CD14-positive monocyte (primary cell): ENCODE measurements at regions of chr2 and their contacts with region 1.

Region 1: DNA sequence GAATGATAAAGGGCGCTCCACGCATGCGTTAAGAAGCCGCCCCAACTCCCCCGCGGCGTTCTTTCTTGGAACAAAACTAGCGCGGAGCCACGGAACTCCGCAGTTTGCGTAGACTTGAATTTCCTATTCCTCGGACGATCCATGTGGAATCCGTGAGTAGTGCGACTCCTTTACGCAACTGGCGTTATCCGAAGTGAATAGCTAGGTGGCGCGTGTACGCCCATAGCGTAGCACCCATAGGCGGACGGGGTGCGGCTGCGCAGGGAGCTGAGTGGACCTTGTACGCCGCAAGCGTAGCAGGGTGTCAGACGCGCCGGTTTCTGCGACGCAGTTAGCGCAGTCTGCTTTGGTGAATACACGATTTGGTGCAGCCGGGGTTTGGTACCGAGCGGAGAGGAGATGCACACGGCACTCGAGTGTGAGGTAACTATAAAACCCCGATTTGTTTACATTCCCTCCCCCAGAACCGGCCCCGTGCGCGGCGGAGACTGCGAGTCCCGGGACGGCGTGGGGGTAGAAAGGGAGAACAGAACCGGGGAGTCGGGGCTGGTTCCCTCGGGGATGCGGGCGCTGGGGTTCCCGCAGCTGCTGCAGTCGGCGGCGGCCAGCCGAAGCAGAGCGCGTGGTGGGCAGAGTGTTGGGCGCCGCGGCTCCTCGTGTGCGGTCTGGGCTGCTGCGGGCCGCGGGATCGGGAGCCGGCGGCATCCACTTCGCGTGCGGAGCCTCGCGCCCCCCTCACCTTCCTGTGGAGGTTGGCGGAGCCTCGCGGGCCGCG is at the start of gene SLC39A10:
- DNase-seq: peak; percentile 97 to 99 (median 98)
- H3K4me3 ChIP-seq: peak within 1 kb of the TSS; percentile 60 to 100 (median 91)
- H3K4me3 Mint-ChIP-seq: peak within 1 kb of the TSS; percentile 96 to 97
- H3K27ac ChIP-seq: peak within 1 kb of the TSS; percentile 82 to 97
- H3K27ac Mint-ChIP-seq: peak within 1 kb of the TSS; percentile 92 to 99 (median 97)
- H3K4me1 ChIP-seq: peaks cover 21 to 59% of the 10 kb centered on the region in 2 donors
- H3K4me1 Mint-ChIP-seq: peaks cover 42% of the 10 kb centered on the region
- H3K27me3 ChIP-seq: no peaks in the 10 kb centered on the region
- H3K27me3 Mint-ChIP-seq: peaks cover 0 to 2% (median 0%) of the 10 kb centered on the region in 3 donors
- CTCF ChIP-seq: no peak
- polyA plus RNA-seq, gene SLC39A10: 5.2 to 6.9 (median 5.2) TPM

Region 2: GRCh38 chr2:195498176-195498575 is 158.9 kb before region 1 on chr2:
- intact Hi-C with region 1: loop called (anchors 2 to 10 kb)
- DNase-seq: peak; percentile 39 to 59 (median 58)
- H3K4me3 ChIP-seq: no peak overlapping the region
- H3K4me3 Mint-ChIP-seq: no peak overlapping the region
- H3K27ac ChIP-seq: no peak overlapping the region
- H3K27ac Mint-ChIP-seq: no peak overlapping the region
- H3K4me1 ChIP-seq: no peaks in the 10 kb centered on the region
- H3K4me1 Mint-ChIP-seq: no peaks in the 10 kb centered on the region
- H3K27me3 ChIP-seq: no peaks in the 10 kb centered on the region
- H3K27me3 Mint-ChIP-seq: peaks cover 0 to 2% (median 0%) of the 10 kb centered on the region in 3 donors
- CTCF ChIP-seq: peak; percentile 65

Region 3: GRCh38 chr2:195561203-195562032 is 95.6 kb before region 1 on chr2:
- intact Hi-C with region 1: loop called in 1 of 2 experiments (anchors 5 kb)
- DNase-seq: peak; percentile 63 to 86 (median 74)
- H3K4me3 ChIP-seq: peak overlapping the region in 2 of 3 experiments; percentile 1 to 57
- H3K4me3 Mint-ChIP-seq: peak overlapping the region in 1 of 2 donors; percentile 87
- H3K27ac ChIP-seq: peak overlapping the region; percentile 88 to 93
- H3K27ac Mint-ChIP-seq: peak overlapping the region; percentile 92 to 98 (median 96)
- H3K4me1 ChIP-seq: peaks cover 39 to 43% of the 10 kb centered on the region in 2 donors
- H3K4me1 Mint-ChIP-seq: peaks cover 38% of the 10 kb centered on the region
- H3K27me3 ChIP-seq: no peaks in the 10 kb centered on the region
- H3K27me3 Mint-ChIP-seq: no peaks in the 10 kb centered on the region
- CTCF ChIP-seq: no peak

Region 4: DNA sequence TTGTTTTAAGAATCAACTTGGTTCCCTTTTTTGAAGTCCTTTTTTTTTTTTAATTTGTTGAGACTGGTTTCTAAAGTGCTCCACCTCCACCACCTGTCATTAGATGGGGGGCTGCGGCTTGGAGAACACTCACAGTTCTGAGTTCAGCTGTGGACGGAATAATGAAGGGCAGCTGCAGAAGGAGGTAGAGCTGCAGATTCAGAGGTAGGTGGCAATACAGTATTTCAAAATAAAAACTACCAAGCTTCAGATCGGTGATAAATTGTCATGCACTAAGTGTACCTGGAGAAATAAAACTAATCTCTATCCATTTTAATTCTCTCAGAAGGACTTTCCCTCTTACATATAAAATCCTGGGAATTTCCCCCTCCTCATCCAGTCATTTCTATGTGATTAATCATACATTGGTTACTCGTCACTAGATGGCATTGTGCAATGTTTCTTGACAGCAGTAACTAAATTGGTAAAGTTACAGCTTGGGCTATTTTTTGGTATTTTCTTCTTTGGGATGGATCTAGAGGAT is 81.1 kb before region 1 on chr2:
- intact Hi-C with region 1: loop called (anchors 5 to 10 kb)
- DNase-seq: peak; percentile 80 to 96 (median 92)
- H3K4me3 ChIP-seq: peak overlapping the region in 2 of 3 experiments; percentile 44 to 55
- H3K4me3 Mint-ChIP-seq: peak overlapping the region; percentile 68 to 84
- H3K27ac ChIP-seq: peak overlapping the region; percentile 36 to 80
- H3K27ac Mint-ChIP-seq: peak overlapping the region; percentile 87 to 98 (median 94)
- H3K4me1 ChIP-seq: peaks cover 35 to 41% of the 10 kb centered on the region in 2 donors
- H3K4me1 Mint-ChIP-seq: peaks cover 37% of the 10 kb centered on the region
- H3K27me3 ChIP-seq: no peaks in the 10 kb centered on the region
- H3K27me3 Mint-ChIP-seq: no peaks in the 10 kb centered on the region
- CTCF ChIP-seq: no peak

Region 5: GRCh38 chr2:195608768-195609454 is 48.1 kb before region 1 on chr2:
- intact Hi-C with region 1: loop called in 1 of 2 experiments (anchors 5 kb)
- DNase-seq: no peak
- H3K4me3 ChIP-seq: no peak overlapping the region
- H3K4me3 Mint-ChIP-seq: no peak overlapping the region
- H3K27ac ChIP-seq: peak overlapping the region in 1 of 2 donors; percentile 86
- H3K27ac Mint-ChIP-seq: peak overlapping the region in 5 of 7 donors; percentile 8 to 69 (median 50)
- H3K4me1 ChIP-seq: peaks cover 35 to 43% of the 10 kb centered on the region in 2 donors
- H3K4me1 Mint-ChIP-seq: peaks cover 39% of the 10 kb centered on the region
- H3K27me3 ChIP-seq: no peaks in the 10 kb centered on the region
- H3K27me3 Mint-ChIP-seq: no peaks in the 10 kb centered on the region
- CTCF ChIP-seq: no peak

Region 6: DNA sequence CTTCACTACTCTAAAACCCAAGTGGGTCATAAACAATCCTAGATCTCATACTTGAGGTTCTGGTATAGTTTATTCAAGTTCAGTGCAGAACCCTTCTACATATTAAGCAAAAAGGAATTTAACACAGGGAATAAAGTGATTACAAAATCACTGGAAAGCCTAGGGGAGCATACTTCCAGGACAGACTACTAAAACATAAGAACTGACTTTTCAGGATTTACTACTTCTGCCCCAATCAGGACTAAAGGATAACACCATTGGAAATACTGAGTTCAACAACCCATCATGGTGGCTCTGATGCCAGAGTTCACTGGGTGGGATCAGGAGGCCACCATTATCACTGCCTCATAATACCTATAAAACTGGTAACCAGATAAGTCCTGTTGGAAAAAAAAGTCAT is 288.0 kb after region 1 on chr2:
- intact Hi-C with region 1: no loop called
- DNase-seq: no peak
- H3K4me3 ChIP-seq: no peak overlapping the region
- H3K4me3 Mint-ChIP-seq: no peak overlapping the region
- H3K27ac ChIP-seq: no peak overlapping the region
- H3K27ac Mint-ChIP-seq: no peak overlapping the region
- H3K4me1 ChIP-seq: no peaks in the 10 kb centered on the region
- H3K4me1 Mint-ChIP-seq: no peaks in the 10 kb centered on the region
- H3K27me3 ChIP-seq: no peaks in the 10 kb centered on the region
- H3K27me3 Mint-ChIP-seq: peaks cover 0 to 1% (median 0%) of the 10 kb centered on the region in 3 donors
- CTCF ChIP-seq: no peak